ENCODE measurements at regions of chr6 and their contacts with region 1.

Region 1: DNA sequence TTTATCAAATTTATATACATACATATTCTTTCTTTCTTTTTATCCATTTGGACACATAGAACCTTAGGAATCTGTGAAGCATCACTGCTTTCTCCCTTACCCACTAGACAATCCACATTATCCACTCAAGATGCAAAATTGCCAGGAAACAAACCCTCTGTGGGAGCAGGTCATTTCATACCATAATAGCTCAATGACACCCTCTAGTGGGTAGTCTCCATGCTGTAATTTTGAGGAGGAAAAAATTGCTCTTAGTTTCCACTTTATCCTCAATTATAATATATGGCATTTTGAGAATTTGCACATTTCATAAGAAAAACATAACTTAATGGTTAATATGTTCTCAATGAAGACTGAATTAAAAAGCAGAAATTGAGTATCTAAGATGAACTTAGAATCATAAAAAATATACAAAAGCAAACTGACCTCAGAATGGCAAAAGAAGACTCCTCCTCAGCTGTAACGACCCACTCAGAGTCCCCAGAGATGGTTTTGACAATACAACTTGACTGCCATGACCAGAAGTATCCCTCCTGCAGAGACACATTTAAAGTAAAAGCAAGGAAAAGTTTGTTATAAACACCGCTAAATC is 164.1 kb downstream of the FRK start:
- DNase-seq: peak; percentile 62
- ATAC-seq: 0 out of 2 replicates have a peak, but pooled peaks have one; percentile 24
- H3K4me3 ChIP-seq: no peak overlapping the region
- H3K27ac ChIP-seq: no peak overlapping the region
- H3K4me1 ChIP-seq: peaks cover 11% of the 10 kb centered on the region
- H3K27me3 ChIP-seq: no peaks in the 10 kb centered on the region
- CTCF ChIP-seq: peak; percentile 88

Region 2: DNA sequence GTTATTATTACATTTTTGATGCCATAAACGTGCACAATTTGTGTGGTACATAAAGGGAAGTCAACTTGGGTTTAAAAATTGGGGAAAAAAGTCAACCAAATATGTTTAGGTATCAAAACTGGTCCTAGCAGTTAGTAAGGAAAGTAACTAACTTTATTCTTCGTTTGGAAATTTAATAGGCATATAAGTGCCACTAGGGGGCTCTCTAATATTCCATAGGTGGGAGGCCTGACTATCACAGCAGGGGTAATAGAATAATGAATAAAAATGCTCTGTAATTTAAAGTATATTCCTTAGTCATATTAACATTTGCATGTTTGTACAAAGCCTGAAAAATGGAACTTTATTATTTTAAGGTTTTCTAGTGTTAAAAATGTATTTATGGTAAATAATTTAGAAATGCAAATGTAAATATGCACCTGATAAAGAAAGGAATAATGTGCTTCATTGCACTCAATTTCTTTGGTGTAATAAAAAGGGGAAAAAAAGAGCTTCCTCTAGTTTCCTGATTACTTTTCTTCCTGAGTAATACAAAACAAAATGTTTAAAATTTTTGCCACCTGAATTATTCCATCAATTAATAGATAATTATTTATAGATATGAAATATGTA is 1800.0 kb before region 1 on chr6:
- CTCF ChIA-PET with region 1: no interaction called
- POLR2A ChIA-PET with region 1: no interaction called
- intact Hi-C with region 1: loop called (anchors 5 kb)
- DNase-seq: peak; percentile 52
- ATAC-seq: no peak
- H3K4me3 ChIP-seq: no peak overlapping the region
- H3K27ac ChIP-seq: no peak overlapping the region
- H3K4me1 ChIP-seq: no peaks in the 10 kb centered on the region; the same call in 1 of the 2 replicates
- H3K27me3 ChIP-seq: no peaks in the 10 kb centered on the region
- CTCF ChIP-seq: peak; percentile 81

Region 3: DNA sequence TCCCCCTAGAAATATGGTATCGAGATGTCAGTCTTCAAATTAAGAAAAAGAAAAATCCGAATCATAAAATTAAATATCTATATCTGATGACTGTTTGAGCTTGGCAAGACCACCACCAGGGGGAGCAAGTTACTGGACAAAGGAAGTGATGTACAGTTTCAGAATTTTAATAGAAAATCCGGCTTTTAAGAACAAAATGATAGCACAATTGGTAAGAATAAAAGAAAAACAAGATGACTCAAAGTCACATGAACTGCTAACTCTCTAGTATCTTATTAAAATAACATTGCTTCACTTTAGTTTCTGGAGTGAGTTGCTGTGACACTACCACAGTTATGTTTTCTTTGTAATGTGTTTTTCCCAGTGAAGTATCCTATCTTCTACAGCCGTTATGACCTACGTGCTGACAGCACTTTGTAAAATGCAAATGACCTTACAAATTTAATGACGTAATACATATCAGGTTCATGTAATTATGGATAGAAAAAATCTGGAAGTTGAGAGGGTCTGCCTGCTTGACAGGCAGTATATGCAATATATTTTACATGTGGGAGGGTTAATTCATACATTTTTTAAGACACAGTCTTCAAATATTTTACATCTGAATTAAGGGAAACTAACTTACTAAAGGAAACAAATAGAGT is 1148.5 kb before region 1 on chr6:
- CTCF ChIA-PET with region 1: no interaction called
- POLR2A ChIA-PET with region 1: no interaction called
- intact Hi-C with region 1: loop called (anchors 1 kb)
- DNase-seq: peak; percentile 53
- ATAC-seq: 0 out of 2 replicates have a peak, but pooled peaks have one; percentile 40
- H3K4me3 ChIP-seq: no peak overlapping the region
- H3K27ac ChIP-seq: no peak overlapping the region
- H3K4me1 ChIP-seq: no peaks in the 10 kb centered on the region
- H3K27me3 ChIP-seq: no peaks in the 10 kb centered on the region
- CTCF ChIP-seq: peak; percentile 79

Region 4: GRCh38 chr6:115865914-115866313 is 30.7 kb before region 1 on chr6:
- CTCF ChIA-PET with region 1: no interaction called
- POLR2A ChIA-PET with region 1: no interaction called
- intact Hi-C with region 1: no loop called
- DNase-seq: no peak
- ATAC-seq: no peak
- H3K4me3 ChIP-seq: no peak overlapping the region
- H3K27ac ChIP-seq: no peak overlapping the region
- H3K4me1 ChIP-seq: no peaks in the 10 kb centered on the region
- H3K27me3 ChIP-seq: peaks cover 11% of the 10 kb centered on the region
- CTCF ChIP-seq: no peak

Region 5: DNA sequence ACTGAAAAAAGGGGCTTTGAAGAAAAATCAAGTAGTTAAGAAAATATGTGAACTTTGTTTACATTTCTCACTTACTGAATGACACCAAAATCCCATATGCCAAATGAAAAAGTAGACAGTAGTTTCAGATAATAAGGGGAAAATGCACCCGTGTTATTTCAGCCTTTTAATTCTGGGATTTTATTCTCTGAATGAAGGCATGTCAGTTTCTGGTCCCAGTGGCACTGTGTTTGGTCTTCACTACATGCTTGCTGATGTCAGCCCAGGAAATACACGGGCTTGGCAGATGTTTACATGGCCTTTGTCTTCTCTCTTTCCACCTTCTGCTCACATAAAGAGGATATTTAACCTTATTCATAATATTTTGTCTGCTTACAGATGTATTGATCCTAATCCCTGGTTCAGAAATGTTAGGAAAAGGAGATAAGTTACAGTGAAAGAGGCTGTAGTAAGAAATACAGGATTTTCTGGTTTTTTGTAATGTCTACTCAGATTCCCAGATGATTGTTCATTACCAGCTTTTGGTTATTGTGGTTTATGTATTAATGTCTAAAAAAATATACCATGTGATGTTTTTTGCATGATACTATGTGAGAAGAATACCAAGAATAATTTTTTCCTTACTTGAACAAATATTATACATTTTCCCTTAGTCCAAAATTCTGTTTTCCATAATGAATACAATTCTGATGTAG is 501.8 kb after region 1 on chr6:
- CTCF ChIA-PET with region 1: no interaction called
- POLR2A ChIA-PET with region 1: no interaction called
- intact Hi-C with region 1: no loop called
- DNase-seq: peak; percentile 68
- ATAC-seq: peak; percentile 42; the same call in 1 of the 2 replicates
- H3K4me3 ChIP-seq: peak overlapping the region; percentile 32; the same call in 1 of the 2 replicates
- H3K27ac ChIP-seq: peak overlapping the region; percentile 34
- H3K4me1 ChIP-seq: peaks cover 27% of the 10 kb centered on the region
- H3K27me3 ChIP-seq: no peaks in the 10 kb centered on the region
- CTCF ChIP-seq: no peak

Measured in PC-3 (cell line).